ENCODE measurements at regions of chrX and their contacts with region 1.

Region 1: GRCh38 chrX:106039920-106040319 is 1.4 kb upstream of the SERPINA7 start:
- DNase-seq: no peak

Region 2: DNA sequence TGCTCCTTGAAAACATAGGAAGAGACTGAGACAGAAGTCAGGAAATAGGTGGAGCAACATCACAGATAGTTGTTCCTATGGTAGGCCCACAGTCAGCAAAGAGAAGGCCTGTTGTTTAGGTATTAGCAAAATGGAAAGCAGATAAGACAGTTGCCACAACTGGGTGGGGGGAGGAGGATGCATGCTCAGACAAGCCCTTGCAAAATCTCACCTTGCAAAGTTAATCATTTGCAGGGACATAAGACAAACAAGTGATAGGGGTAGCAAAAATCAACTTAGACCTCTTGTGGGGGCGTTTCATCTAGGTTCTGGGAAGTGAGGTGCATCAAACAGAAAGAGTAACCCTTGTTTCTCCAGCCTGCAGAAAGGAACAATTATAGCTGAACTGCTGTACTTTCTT is 32.1 kb before region 1 on chrX:
- intact Hi-C with region 1: no loop called
- DNase-seq: no peak

Region 3: GRCh38 chrX:106397801-106398538 is 358.1 kb after region 1 on chrX:
- intact Hi-C with region 1: loop called (anchors 10 kb)
- DNase-seq: no peak

Region 4: DNA sequence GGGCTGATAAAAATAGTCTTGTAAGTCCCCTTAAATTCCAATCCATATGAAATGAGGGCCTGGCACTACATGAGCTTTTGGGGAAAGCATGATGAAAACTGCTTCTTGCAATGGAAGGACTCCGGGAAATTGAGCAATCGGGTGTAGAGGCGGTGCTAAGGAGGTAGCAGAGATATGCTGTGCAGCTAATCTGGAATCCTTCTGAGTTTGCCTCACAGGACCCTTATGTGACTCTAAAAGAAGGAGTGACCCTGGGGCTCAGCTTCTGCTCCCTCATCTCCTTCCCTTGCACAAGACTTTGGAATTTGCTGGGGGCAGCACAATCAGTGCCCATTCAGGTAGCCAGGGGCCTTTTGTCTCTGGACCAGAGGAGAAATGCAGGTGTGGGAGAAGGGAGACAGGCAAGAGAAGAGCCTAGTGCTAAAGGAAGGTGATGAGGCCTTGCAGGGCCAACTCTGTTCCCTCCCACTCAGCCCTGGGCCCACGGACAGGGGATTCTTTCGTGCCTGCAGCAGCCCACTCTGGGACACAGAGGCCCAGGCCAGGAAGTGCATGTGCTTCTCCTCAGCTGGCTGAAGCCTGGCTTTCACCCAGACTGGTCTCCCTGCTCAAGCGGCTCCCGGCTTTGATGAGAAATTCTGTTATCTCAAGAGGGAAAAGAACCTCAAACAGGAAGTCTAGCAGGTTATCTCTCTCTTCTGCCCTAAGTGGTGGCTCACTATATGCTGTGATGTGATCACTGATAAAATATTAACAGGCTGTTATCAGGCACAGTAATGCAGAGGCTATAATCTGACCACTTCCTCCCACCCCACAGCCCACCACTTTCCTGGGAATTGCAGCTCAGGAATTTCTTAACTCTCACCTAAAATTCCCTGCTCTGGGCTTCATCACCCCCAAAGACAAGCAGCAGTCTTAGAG is 893.4 kb after region 1 on chrX:
- intact Hi-C with region 1: no loop called
- DNase-seq: no peak

Measured in cardiac septum (tissue), 1 donor.